A673 (cell line): ENCODE measurements at regions of chr5 and their contacts with region 1.

Region 1: GRCh38 chr5:95162231-95162992 is 122.5 kb downstream of the MCTP1 start:
- DNase-seq: peak; percentile 14
- H3K4me3 ChIP-seq: no peak overlapping the region
- H3K27ac ChIP-seq: no peak overlapping the region
- H3K4me1 ChIP-seq: peaks cover 18% of the 10 kb centered on the region
- H3K27me3 ChIP-seq: no peaks in the 10 kb centered on the region
- CTCF ChIP-seq: no peak

Region 2: DNA sequence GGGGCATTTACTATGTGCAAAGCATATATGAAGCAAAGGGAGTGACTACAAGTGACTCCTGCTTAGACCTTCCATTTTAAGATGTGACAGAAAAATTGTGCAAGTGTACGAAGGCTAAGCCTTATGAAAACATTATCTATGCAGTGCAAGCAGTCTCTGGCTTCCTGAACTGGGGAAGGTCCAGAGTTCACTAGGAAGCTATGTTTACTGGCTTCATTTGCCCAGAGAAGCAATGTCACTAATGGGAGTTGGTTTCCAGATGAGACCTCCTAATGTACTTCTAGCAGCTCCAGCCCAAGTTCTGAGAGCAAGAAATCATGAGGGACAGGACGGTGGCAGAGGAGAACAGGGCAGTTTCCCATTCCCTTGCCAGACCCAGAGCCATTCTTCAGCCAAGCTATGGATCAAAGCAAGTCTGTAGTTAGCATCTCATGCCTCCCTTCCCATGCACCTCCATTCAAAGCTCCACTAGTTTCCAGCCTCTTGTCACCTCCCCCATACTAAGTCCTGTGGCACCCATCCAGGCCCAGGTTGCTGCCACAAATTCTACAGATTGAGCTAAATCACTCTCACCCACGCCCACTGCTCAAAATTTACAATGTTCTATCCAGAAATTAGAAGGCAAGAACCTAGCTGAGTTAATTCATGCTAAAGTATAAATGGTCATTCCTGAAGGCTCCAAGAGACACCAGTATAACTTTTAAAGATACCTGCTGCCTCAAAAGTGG is 100.7 kb after region 1 on chr5:
- CTCF ChIA-PET with region 1: no interaction called
- POLR2A ChIA-PET with region 1: no interaction called
- intact Hi-C with region 1: no loop called
- DNase-seq: no peak
- H3K4me3 ChIP-seq: no peak overlapping the region
- H3K27ac ChIP-seq: no peak overlapping the region
- H3K4me1 ChIP-seq: no peaks in the 10 kb centered on the region
- H3K27me3 ChIP-seq: no peaks in the 10 kb centered on the region
- CTCF ChIP-seq: no peak

Region 3: DNA sequence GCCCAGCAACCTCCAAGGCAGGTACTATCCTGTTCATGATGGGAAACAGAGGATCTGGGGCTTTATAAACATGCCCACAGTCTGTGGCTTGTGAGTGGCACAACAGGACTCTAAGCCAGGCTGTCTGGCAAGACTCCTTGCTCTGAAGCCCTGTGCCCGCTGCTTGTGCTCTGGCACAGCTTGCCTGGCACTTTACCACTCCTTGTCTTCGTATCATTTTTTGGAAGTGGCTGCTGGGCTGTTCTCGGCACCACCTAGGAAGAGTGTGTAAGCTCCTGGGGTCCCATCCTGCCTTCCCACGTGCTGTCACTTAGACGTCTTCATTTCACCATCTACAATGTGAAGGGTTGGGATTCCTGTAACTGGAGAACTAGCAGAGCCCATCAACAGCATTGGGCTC is 719.4 kb after region 1 on chr5:
- CTCF ChIA-PET with region 1: no interaction called
- POLR2A ChIA-PET with region 1: interaction called, 18 read pairs
- intact Hi-C with region 1: no loop called
- DNase-seq: no peak
- H3K4me3 ChIP-seq: no peak overlapping the region
- H3K27ac ChIP-seq: no peak overlapping the region
- H3K4me1 ChIP-seq: no peaks in the 10 kb centered on the region
- H3K27me3 ChIP-seq: no peaks in the 10 kb centered on the region
- CTCF ChIP-seq: no peak